Activated T-helper 1 cell treated with anti-CD3 and anti-CD28 coated beads, Interleukin-12 subunit alpha, Interleukin-12 subunit beta, Interleukin-2, Interleukin-4 antibody, amounts not matched to agents 30 ng/mL and 10 ng/mL and 1 ng/mL, durations not matched to agents 14 hours and 24 hours and 36 hours (primary cell): ENCODE measurements at regions of chr6 and their contacts with region 1.

Region 1: GRCh38 chr6:53426667-53427270 is 78.0 kb upstream of the ELOVL5 start:
- DNase-seq: no peak
- H3K4me3 Mint-ChIP-seq: no peak overlapping the region
- H3K27ac Mint-ChIP-seq: no peak overlapping the region
- H3K4me1 Mint-ChIP-seq: peaks cover 28% of the 10 kb centered on the region
- H3K27me3 Mint-ChIP-seq: no peaks in the 10 kb centered on the region

Region 2: GRCh38 chr6:53359072-53359842 is 67.5 kb before region 1 on chr6:
- intact Hi-C with region 1: loop called (anchors 2 kb)
- DNase-seq: peak; percentile 93
- H3K4me3 Mint-ChIP-seq: peak overlapping the region; percentile 92
- H3K27ac Mint-ChIP-seq: peak overlapping the region; percentile 100
- H3K4me1 Mint-ChIP-seq: peaks cover 50% of the 10 kb centered on the region
- H3K27me3 Mint-ChIP-seq: peaks cover 5% of the 10 kb centered on the region

Region 3: GRCh38 chr6:53437557-53438202 is 10.9 kb after region 1 on chr6:
- intact Hi-C with region 1: loop called (anchors 1 kb)
- DNase-seq: no peak
- H3K4me3 Mint-ChIP-seq: no peak overlapping the region
- H3K27ac Mint-ChIP-seq: peak overlapping the region; percentile 24
- H3K4me1 Mint-ChIP-seq: peaks cover 25% of the 10 kb centered on the region
- H3K27me3 Mint-ChIP-seq: peaks cover 4% of the 10 kb centered on the region